Dorsolateral prefrontal cortex (tissue), 120 donors: ENCODE measurements at regions of chrX and their contacts with region 1.

Region 1: GRCh38 chrX:132219343-132219768 is at the start of gene RAP2C:
- DNase-seq: peak; percentile 28 to 69 (median 58)
- H3K4me3 ChIP-seq: peak within 1 kb of the TSS; percentile 29 to 81 (median 67)
- H3K27ac ChIP-seq: peak within 1 kb of the TSS in 51 of 59 donors; percentile 7 to 90 (median 74)
- H3K27me3 ChIP-seq: peaks cover 0 to 45% (median 13%) of the 10 kb centered on the region in 45 donors
- CTCF ChIP-seq: peak in 54 of 56 donors; percentile 17 to 73 (median 56)
- total RNA-seq, gene RAP2C: 9.3 to 23.3 (median 14.0) TPM

Region 2: DNA sequence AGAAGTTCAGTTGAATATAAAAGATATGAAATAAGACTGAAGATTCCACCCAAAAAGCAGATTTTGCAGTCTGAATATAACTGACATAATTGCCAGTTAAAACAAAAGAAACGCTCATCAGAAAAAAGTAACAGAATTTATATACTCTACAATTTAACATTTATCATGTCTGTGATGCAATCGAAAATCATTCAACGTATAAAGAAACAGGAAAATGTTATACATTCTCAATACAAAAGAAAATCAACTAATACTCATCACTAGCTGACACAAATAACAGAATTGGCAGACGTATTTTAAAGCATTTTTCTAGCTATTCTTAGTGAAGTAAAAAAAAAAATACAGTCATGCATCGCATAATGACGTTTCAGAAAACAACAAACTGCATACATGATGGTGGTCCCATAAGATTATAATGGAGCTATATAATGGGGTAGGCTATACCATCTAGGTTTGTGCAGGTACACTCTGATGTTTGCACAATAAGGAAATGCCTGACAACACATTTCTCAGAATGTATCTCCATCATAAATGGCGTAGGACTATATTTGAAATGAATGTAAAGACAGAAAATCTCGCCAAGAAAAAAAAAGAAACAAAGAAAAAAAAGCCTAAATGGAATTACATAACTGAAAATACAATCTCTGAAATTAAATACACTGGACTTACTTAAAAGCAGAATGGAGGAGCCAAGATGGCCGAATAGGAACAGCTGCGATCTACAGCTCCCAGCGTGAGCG is 641.2 kb before region 1 on chrX:
- intact Hi-C with region 1: no loop called
- DNase-seq: no peak
- H3K4me3 ChIP-seq: no peak overlapping the region
- H3K27ac ChIP-seq: no peak overlapping the region
- H3K27me3 ChIP-seq: peaks cover 0 to 51% (median 25%) of the 10 kb centered on the region in 45 donors
- CTCF ChIP-seq: no peak

Region 3: DNA sequence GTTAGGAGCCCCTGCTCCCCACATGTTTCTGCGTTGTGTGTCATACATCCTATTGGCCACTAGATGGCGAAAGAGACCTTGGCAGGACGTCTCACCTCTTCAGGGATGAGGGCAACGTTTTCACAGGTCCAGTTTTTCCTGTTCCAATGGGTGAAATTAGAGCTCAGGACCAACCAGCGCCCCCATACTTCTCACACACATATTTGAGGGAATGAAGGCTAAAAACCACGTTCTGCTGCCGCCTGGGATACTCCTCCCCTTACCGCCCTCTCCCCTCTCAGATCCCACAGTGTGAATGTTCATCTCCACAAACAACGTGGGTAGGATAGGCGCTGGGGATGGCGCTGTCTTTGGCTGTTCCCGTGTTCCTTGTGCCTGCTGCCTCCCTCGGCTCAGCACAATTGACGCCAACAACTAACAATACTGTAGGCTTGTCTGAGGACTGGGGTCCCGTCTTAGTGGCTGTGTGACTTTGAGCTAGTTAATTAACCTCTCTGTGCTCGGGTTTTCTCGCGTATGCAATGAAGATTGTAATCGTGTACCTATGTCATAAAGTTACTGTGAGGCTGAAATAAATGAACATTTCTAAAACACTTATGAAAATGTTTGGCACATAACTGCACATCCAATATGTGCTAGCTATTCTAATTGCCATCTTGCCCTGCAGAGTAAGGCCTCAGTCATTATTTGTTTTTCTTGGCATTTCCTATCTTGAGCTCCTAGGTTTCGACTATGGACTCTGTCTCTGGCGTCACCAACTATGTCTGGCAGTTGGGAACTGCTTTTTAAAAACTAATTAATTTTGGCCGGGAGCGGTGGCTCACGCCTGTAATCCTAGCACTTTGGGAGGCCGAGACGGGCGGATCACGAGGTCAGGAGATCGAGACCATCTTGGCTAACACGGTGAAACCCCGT is 377.6 kb before region 1 on chrX:
- intact Hi-C with region 1: loop called (anchors 5 to 10 kb)
- DNase-seq: peak in 1 of 10 donors; percentile 48
- H3K4me3 ChIP-seq: peak overlapping the region in 1 of 59 donors; percentile 6
- H3K27ac ChIP-seq: no peak overlapping the region
- H3K27me3 ChIP-seq: peaks cover 0 to 71% (median 26%) of the 10 kb centered on the region in 45 donors
- CTCF ChIP-seq: peak in 55 of 56 donors; percentile 51 to 92 (median 83)

Region 4: DNA sequence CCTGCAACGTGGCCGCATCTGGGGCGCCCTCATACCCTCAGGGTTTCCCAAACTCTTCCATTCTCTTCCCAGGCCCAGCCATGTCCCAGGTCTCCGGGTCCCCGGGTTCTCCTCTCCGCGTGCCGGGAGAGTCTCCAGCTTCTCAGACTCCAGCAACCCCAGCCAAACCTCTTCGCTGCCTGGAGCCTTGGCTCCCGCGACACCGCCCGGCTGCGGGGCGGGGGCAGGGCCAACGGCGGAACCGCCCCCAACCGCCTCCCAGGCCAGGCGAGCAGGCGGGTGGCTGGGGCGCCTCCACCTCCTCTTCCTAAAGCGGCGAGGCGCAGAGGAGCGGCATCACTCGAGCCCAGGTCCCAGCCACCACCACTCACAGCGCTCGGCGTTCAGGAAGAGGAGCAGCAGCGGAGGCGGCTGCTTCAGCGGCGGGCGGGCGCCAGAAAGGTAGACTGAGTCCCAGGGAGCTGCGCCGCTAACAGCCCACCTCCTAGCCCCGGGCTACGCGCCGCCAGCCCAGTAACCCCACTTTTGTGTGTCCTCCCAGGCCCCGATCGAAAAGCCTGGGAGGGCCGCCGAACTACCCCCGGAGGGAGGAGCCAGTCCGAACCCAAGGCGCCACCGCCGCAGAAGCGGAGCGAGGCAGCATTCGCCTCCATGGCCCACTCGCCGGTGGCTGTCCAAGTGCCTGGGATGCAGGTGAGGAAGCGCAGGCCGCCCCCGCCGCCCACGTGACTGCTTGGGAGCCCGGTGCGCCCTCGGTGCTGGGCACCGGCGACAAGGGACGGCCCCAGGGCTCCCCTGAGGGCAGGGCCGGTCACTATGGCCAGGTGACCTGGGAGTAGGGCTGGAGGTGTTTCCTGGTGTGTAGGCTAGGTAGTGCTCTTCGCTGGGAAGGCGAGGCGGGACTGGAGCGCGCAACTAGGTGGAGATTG is 196.1 kb before region 1 on chrX and contains the start of gene STK26:
- intact Hi-C with region 1: loop called in 1 of 2 experiments (anchors 5 kb)
- DNase-seq: peak in 8 of 10 donors; percentile 20 to 59 (median 42)
- H3K4me3 ChIP-seq: peak within 1 kb of the TSS; percentile 30 to 71 (median 57)
- H3K27ac ChIP-seq: peak within 1 kb of the TSS in 2 of 59 donors; percentile 29 to 36
- H3K27me3 ChIP-seq: peaks cover 0 to 95% (median 43%) of the 10 kb centered on the region in 45 donors
- CTCF ChIP-seq: no peak
- total RNA-seq, gene STK26: 0.31 to 3.9 (median 1.1) TPM

Region 5: GRCh38 chrX:132092439-132093065 is 126.8 kb before region 1 on chrX:
- intact Hi-C with region 1: loop called in 1 of 2 experiments (anchors 5 kb)
- DNase-seq: peak in 2 of 10 donors; percentile 32 to 39
- H3K4me3 ChIP-seq: no peak overlapping the region
- H3K27ac ChIP-seq: no peak overlapping the region
- H3K27me3 ChIP-seq: peaks cover 0 to 94% (median 53%) of the 10 kb centered on the region in 45 donors
- CTCF ChIP-seq: peak; percentile 24 to 75 (median 62)

Region 6: GRCh38 chrX:132488819-132489577 is 269.6 kb after region 1 on chrX and contains the start of gene MBNL3:
- intact Hi-C with region 1: loop called in 1 of 2 experiments (anchors 10 kb)
- DNase-seq: peak in 7 of 10 donors; percentile 25 to 50 (median 41)
- H3K4me3 ChIP-seq: peak within 1 kb of the TSS; percentile 31 to 75 (median 57)
- H3K27ac ChIP-seq: peak within 1 kb of the TSS in 48 of 59 donors; percentile 5 to 76 (median 55)
- H3K27me3 ChIP-seq: peaks cover 0 to 90% (median 32%) of the 10 kb centered on the region in 45 donors
- CTCF ChIP-seq: no peak
- total RNA-seq, gene MBNL3: 1.5 to 10.1 (median 4.2) TPM